ENCODE measurements at regions of chr19 and their contacts with region 1.

Region 1: GRCh38 chr19:53424968-53425597 is 6.7 kb upstream of the ZNF761 start:
- DNase-seq: peak in 1 of 2 donors; percentile 89
- H3K4me3 ChIP-seq: no peak overlapping the region
- H3K27ac ChIP-seq: peak overlapping the region; percentile 42
- H3K4me1 ChIP-seq: no peaks in the 10 kb centered on the region
- H3K27me3 ChIP-seq: no peaks in the 10 kb centered on the region
- CTCF ChIP-seq: peak; percentile 61 to 82 (median 65)
- POLR2A ChIP-seq: no peak

Region 2: GRCh38 chr19:53504885-53505284 is 79.8 kb after region 1 on chr19:
- intact Hi-C with region 1: loop called (anchors 10 kb)
- DNase-seq: peak in 1 of 2 donors; percentile 96
- H3K4me3 ChIP-seq: peak overlapping the region; percentile 23 to 24
- H3K27ac ChIP-seq: peak overlapping the region; percentile 73
- H3K4me1 ChIP-seq: no peaks in the 10 kb centered on the region
- H3K27me3 ChIP-seq: no peaks in the 10 kb centered on the region
- CTCF ChIP-seq: no peak
- POLR2A ChIP-seq: no peak

Measured in vagina (tissue), 2 donors.